GM12878 (cell line): ENCODE measurements at regions of chr3 and their contacts with region 1.

Region 1: DNA sequence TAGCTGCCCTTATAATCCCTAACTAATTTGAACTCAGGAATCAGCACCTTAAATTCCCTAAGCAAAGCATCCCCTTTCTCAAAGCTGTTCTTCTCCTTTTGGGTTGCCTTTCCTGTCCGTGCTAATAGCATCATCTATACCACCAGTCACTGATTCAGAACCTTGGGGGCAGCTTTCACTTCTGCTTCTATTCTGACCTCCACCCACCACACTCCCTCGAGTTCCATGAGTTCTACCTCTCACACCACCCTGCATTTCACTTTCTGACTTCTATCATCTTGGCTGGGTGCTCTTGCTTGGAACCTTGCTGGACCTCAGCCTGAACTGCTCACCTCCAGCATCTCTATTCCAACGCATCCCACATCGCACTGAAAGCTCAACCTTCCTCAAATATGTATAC is 55.4 kb upstream of the KCNMB2 start:
- DNase-seq: peak; percentile 70
- ATAC-seq: peak; percentile 99
- H3K4me3 ChIP-seq: no peak overlapping the region
- H3K27ac ChIP-seq: peak overlapping the region; percentile 70
- H3K4me1 ChIP-seq: peaks cover 25% of the 10 kb centered on the region
- H3K27me3 ChIP-seq: no peaks in the 10 kb centered on the region
- CTCF ChIP-seq: no peak
- EP300 ChIP-seq: peak; percentile 90 to 95; a peak in 3 of 4 replicates
- POLR2A ChIP-seq: peak; percentile 30; the same call in 1 of the 2 replicates
- RAD21 ChIP-seq: peak; percentile 25; the same call in 1 of the 2 replicates

Region 2: GRCh38 chr3:178465260-178466180 is 15.3 kb before region 1 on chr3:
- CTCF ChIA-PET with region 1: interaction called, 5 read pairs
- POLR2A ChIA-PET with region 1: interaction called, 3 read pairs
- RAD21 ChIA-PET with region 1: interaction called, 4 read pairs
- SMC1A ChIA-PET with region 1: interaction called, 13 read pairs
- in situ Hi-C with region 1: no loop called
- intact Hi-C with region 1: no loop called
- DNase-seq: no peak
- ATAC-seq: peak; percentile 69
- H3K4me3 ChIP-seq: no peak overlapping the region
- H3K27ac ChIP-seq: peak overlapping the region; percentile 42
- H3K4me1 ChIP-seq: peaks cover 14% of the 10 kb centered on the region
- H3K27me3 ChIP-seq: no peaks in the 10 kb centered on the region
- CTCF ChIP-seq: no peak
- EP300 ChIP-seq: no peak
- POLR2A ChIP-seq: no peak
- RAD21 ChIP-seq: no peak

Region 3: DNA sequence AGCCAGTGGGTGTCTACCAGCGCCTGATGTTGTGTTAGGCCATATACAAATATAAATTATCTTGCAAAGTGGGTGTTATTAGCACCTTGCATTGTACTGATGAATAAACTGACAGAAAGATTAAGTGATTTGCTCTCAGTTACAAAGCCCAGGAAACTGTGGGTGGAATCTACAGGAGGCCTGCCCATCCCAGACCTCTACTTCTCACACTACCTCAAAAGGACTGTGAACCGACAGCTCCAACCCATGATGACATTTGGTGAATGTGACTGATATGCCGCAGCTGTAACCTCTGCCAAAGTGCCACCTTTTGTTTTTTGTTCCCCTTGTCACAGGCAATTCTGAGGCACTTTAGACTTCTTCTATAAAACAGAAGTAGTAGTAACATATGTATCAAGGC is 11.7 kb after region 1 on chr3:
- CTCF ChIA-PET with region 1: no interaction called
- POLR2A ChIA-PET with region 1: no interaction called
- RAD21 ChIA-PET with region 1: interaction called, 4 read pairs
- SMC1A ChIA-PET with region 1: interaction called, 11 read pairs
- in situ Hi-C with region 1: no loop called
- intact Hi-C with region 1: no loop called
- DNase-seq: no peak
- ATAC-seq: no peak
- H3K4me3 ChIP-seq: no peak overlapping the region
- H3K27ac ChIP-seq: no peak overlapping the region
- H3K4me1 ChIP-seq: no peaks in the 10 kb centered on the region
- H3K27me3 ChIP-seq: no peaks in the 10 kb centered on the region
- CTCF ChIP-seq: no peak
- EP300 ChIP-seq: 0 out of 4 replicates have a peak, but pooled peaks of 1 of the 2 experiments have one; percentile 20
- POLR2A ChIP-seq: no peak
- RAD21 ChIP-seq: no peak

Region 4: DNA sequence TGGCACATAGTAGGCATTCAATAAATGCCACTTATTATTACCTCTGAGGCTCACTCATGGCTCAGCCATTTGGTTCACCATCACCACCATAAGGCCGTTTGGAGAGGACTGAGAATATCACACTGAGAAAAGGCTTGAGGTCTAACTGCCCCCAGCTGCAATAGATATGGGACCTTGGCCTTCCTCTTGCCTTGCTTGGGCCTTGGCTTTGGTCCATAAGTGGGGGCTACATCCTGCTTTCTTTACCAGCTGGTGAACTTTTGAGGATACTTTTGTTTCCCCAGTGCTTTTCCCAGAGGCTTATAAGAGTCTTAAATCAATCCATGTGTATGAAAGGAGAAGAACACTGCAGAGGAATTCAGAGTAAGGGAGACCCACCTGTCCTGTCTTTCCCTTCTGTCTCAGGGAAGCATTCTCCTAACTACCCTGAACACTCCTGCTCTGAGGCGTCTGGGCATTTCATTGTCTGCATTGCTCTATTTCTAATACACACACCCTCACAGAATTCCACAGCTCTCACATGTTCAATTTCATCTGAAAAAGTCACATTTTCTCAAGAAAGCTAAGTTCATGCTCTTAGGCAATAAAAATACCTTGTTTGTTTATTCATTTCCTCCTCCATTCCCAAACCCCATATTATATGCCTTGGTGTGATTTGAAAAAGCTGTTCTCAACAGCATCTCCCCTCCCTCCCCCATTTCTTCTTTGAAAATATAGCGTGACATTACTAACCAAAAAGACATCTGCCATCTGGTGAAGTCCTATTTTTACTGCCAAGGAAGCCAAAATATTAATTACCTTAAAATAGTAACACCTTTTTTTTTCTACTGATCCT is 33.0 kb after region 1 on chr3:
- CTCF ChIA-PET with region 1: interaction called, 6 read pairs
- POLR2A ChIA-PET with region 1: interaction called, 7 read pairs
- RAD21 ChIA-PET with region 1: interaction called, 6 read pairs
- SMC1A ChIA-PET with region 1: interaction called, 10 read pairs
- in situ Hi-C with region 1: no loop called
- intact Hi-C with region 1: loop called (anchors 2 kb)
- DNase-seq: no peak
- ATAC-seq: peak; percentile 28
- H3K4me3 ChIP-seq: no peak overlapping the region
- H3K27ac ChIP-seq: peak overlapping the region; percentile 97
- H3K4me1 ChIP-seq: peaks cover 57% of the 10 kb centered on the region
- H3K27me3 ChIP-seq: no peaks in the 10 kb centered on the region
- CTCF ChIP-seq: no peak
- EP300 ChIP-seq: peak; percentile 76 to 98
- POLR2A ChIP-seq: no peak
- RAD21 ChIP-seq: peak; percentile 40